HEK293 (cell line): ENCODE measurements at regions of chr2 and their contacts with region 1.

Region 1: DNA sequence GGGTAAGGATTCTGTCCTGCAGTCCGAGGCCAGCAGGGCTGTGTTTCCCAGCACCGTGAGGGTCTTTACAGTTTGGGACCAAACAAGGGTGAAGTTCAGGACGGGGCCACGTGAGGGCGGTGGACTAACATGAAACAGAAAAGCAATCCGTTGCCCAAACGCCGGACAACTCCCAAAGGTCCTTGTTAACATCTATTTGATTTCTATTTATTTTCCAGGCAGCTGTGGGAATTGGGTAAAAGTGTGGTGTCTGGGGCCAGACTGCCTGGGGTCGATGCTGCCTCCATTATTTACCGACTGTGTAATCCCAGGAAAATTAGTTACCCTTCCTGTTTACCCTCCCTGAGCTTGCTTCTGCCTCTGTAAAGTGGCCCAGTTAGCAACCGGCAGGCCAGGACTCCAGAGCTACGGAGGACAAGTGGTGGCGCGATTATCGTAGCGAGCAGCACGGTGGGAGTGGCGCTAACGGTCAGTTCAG is 66.3 kb upstream of the TCF7L1 start:
- H3K4me3 ChIP-seq: no peak overlapping the region
- H3K27ac ChIP-seq: no peak overlapping the region
- H3K4me1 ChIP-seq: no peaks in the 10 kb centered on the region
- CTCF ChIP-seq: peak; percentile 51

Region 2: GRCh38 chr2:85053802-85054201 is 13.1 kb before region 1 on chr2:
- CTCF ChIA-PET with region 1: interaction called, 19 read pairs
- POLR2A ChIA-PET with region 1: no interaction called
- H3K4me3 ChIP-seq: no peak overlapping the region
- H3K27ac ChIP-seq: no peak overlapping the region
- H3K4me1 ChIP-seq: no peaks in the 10 kb centered on the region
- CTCF ChIP-seq: no peak

Region 3: GRCh38 chr2:85114586-85115330 is 47.8 kb after region 1 on chr2:
- CTCF ChIA-PET with region 1: interaction called, 13 read pairs
- POLR2A ChIA-PET with region 1: no interaction called
- H3K4me3 ChIP-seq: no peak overlapping the region
- H3K27ac ChIP-seq: no peak overlapping the region
- H3K4me1 ChIP-seq: no peaks in the 10 kb centered on the region
- CTCF ChIP-seq: no peak

Region 4: GRCh38 chr2:85162746-85163301 is 95.9 kb after region 1 on chr2:
- CTCF ChIA-PET with region 1: interaction called, 11 read pairs
- POLR2A ChIA-PET with region 1: no interaction called
- H3K4me3 ChIP-seq: no peak overlapping the region
- H3K27ac ChIP-seq: no peak overlapping the region
- H3K4me1 ChIP-seq: peaks cover 11% of the 10 kb centered on the region
- CTCF ChIP-seq: no peak

Region 5: DNA sequence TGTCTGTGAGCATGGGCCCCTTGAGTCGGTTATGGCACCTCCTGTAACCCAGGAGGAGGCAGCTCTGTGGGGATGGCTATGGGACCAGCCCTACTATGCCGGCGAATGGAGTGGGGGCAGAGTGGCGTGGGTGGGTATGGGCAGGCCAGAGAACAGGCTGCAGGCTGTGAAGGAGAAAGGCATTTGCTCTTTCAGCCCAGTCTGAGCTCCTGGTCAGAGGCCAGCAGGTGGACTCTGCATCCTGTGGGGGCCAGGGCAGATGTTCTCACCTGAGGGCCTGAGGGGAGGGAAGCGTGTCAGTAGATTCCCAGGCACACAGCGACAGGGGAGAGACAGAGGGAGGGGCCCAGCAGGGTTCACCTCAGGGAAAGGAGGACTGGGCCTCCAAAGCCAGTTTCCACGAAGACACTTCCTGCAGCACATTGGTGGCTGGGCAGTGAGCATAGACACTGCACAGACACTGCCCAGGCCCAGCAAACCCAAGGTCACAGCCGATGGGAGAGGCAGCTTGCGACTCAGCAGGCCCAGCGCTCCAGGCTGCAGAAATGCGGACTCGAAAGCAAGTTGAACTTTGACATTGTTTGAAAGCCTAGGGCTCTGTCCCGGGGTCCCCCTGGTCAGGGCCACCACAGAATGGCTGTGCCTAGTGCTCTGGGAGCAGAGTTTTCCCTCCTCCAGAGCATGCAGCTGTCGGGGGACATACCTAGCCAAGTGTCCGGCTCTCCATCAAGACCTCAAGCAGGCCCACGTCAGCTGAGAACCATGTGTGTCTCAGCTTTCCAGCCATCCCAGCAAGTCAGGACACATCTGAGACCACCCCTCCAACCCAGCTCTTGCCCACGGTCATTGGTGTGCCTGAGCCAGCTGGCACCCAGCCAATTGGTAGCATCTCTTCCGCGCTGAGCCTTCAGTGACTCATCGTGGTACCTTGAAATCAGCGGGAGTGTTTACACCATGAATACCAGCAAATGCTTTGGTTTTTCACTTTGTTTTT is 207.1 kb after region 1 on chr2:
- CTCF ChIA-PET with region 1: interaction called, 18 read pairs
- POLR2A ChIA-PET with region 1: no interaction called
- H3K4me3 ChIP-seq: no peak overlapping the region
- H3K27ac ChIP-seq: no peak overlapping the region
- H3K4me1 ChIP-seq: 0 out of 2 replicates have a peak, but pooled peaks cover 3% of the 10 kb centered on the region
- CTCF ChIP-seq: no peak

Region 6: DNA sequence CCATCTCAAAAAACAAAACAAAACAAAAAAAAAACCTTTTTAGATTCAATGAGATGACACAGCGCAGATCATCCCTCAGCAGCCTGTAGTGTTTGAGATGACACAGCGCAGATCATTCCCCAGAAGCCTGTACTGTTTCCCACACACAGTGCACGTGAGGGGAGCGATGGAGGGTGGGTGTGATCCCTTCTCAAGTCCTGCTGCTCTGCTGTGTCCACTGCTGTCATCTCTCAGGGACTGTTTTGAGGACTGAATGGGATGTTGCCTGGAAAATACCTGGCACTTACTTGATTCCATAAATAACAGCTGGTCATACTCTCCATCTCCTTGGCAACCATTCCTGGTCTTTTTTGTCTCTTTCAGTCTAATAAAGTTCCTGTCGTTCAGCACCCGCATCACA is 235.2 kb after region 1 on chr2:
- CTCF ChIA-PET with region 1: interaction called, 221 read pairs
- POLR2A ChIA-PET with region 1: no interaction called
- H3K4me3 ChIP-seq: no peak overlapping the region
- H3K27ac ChIP-seq: no peak overlapping the region
- H3K4me1 ChIP-seq: no peaks in the 10 kb centered on the region
- CTCF ChIP-seq: no peak